Mammary epithelial cell (primary cell): ENCODE measurements at regions of chr1 and their contacts with region 1.

Region 1: DNA sequence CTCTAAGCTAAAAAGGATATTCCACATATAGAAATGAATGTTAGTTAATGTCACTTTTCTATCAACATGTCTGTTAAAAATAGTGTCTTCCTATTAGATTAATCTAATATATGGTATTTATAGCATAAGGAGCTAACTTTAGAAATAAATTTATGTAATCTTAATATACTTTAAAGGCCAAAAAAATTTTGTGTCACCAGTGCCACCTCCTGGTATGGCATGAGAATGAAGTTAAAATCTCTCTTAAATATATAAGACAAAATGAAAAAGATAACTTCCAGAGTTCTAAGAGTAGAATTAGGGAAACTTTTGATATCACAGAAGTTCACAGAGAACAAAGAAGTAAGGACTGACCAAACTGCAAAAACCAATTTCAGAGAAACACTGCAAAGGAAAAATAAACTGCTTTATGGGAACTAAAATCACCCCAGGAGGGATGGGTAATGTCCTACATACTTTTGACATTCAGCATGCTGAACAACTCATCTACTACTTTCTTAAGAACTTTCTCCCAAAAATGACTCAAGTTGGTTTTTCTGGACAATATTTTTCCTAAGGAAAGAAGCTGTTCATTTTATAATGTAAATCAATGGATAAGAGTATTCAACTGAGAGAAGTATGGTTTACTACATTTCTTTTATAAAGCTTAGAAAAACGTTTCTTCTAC is 82.8 kb downstream of the TRIM33 start:
- DNase-seq: no peak
- H3K4me3 ChIP-seq: no peak overlapping the region
- H3K27ac ChIP-seq: no peak overlapping the region
- H3K4me1 ChIP-seq: no peaks in the 10 kb centered on the region
- H3K27me3 ChIP-seq: no peaks in the 10 kb centered on the region
- CTCF ChIP-seq: peak; percentile 42 to 46

Region 2: GRCh38 chr1:113734357-113735055 is 693.7 kb before region 1 on chr1:
- CTCF ChIA-PET with region 1: no interaction called
- dilution Hi-C with region 1: no loop called
- in situ Hi-C with region 1: no loop called
- intact Hi-C with region 1: no loop called
- DNase-seq: no peak
- H3K4me3 ChIP-seq: no peak overlapping the region
- H3K27ac ChIP-seq: no peak overlapping the region
- H3K4me1 ChIP-seq: no peaks in the 10 kb centered on the region
- H3K27me3 ChIP-seq: no peaks in the 10 kb centered on the region
- CTCF ChIP-seq: no peak

Region 3: GRCh38 chr1:114379987-114380386 is 48.2 kb before region 1 on chr1:
- CTCF ChIA-PET with region 1: no interaction called
- dilution Hi-C with region 1: no loop called
- in situ Hi-C with region 1: no loop called
- intact Hi-C with region 1: no loop called
- DNase-seq: no peak
- H3K4me3 ChIP-seq: no peak overlapping the region
- H3K27ac ChIP-seq: no peak overlapping the region
- H3K4me1 ChIP-seq: no peaks in the 10 kb centered on the region
- H3K27me3 ChIP-seq: no peaks in the 10 kb centered on the region
- CTCF ChIP-seq: no peak

Region 4: GRCh38 chr1:114511032-114511785 is 83.0 kb after region 1 on chr1 and contains the start of gene TRIM33:
- CTCF ChIA-PET with region 1: no interaction called
- dilution Hi-C with region 1: no loop called
- in situ Hi-C with region 1: no loop called
- intact Hi-C with region 1: loop called (anchors 5 kb)
- DNase-seq: peak; percentile 93
- H3K4me3 ChIP-seq: peak within 1 kb of the TSS; percentile 99
- H3K27ac ChIP-seq: peak within 1 kb of the TSS; percentile 82
- H3K4me1 ChIP-seq: peaks cover 14% of the 10 kb centered on the region
- H3K27me3 ChIP-seq: no peaks in the 10 kb centered on the region
- CTCF ChIP-seq: no peak
- total RNA-seq, gene TRIM33: 32.8 to 43.8 TPM

Region 5: DNA sequence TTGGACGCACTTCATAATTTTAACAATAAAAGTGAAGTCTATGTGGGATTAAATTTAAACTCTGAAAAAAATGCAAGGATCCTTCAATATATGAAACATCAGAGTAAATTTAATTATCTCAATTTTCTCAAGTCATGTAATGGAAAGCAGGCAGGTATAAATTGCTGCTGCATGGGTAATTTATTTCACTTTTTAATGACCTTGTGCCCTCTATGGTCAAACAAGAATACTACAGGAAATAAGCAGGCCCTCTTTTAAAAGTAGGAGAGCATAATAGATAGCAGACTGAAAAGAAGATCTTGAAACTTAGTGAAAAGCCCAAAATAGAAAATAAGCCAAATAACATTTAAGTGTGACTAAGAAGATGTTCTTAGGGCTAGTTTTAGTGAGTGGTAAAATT is 130.3 kb after region 1 on chr1:
- CTCF ChIA-PET with region 1: no interaction called
- dilution Hi-C with region 1: no loop called
- in situ Hi-C with region 1: no loop called
- intact Hi-C with region 1: loop called (anchors 10 kb)
- DNase-seq: peak; percentile 13
- H3K4me3 ChIP-seq: no peak overlapping the region
- H3K27ac ChIP-seq: no peak overlapping the region
- H3K4me1 ChIP-seq: no peaks in the 10 kb centered on the region
- H3K27me3 ChIP-seq: no peaks in the 10 kb centered on the region
- CTCF ChIP-seq: peak; percentile 39 to 50

Region 6: GRCh38 chr1:114660224-114660623 is 232.0 kb after region 1 on chr1:
- CTCF ChIA-PET with region 1: no interaction called
- dilution Hi-C with region 1: no loop called
- in situ Hi-C with region 1: no loop called
- intact Hi-C with region 1: no loop called
- DNase-seq: no peak
- H3K4me3 ChIP-seq: no peak overlapping the region
- H3K27ac ChIP-seq: no peak overlapping the region
- H3K4me1 ChIP-seq: peaks cover 5% of the 10 kb centered on the region
- H3K27me3 ChIP-seq: no peaks in the 10 kb centered on the region
- CTCF ChIP-seq: no peak